ENCODE measurements at regions of chr1 and their contacts with region 1.

Region 1: DNA sequence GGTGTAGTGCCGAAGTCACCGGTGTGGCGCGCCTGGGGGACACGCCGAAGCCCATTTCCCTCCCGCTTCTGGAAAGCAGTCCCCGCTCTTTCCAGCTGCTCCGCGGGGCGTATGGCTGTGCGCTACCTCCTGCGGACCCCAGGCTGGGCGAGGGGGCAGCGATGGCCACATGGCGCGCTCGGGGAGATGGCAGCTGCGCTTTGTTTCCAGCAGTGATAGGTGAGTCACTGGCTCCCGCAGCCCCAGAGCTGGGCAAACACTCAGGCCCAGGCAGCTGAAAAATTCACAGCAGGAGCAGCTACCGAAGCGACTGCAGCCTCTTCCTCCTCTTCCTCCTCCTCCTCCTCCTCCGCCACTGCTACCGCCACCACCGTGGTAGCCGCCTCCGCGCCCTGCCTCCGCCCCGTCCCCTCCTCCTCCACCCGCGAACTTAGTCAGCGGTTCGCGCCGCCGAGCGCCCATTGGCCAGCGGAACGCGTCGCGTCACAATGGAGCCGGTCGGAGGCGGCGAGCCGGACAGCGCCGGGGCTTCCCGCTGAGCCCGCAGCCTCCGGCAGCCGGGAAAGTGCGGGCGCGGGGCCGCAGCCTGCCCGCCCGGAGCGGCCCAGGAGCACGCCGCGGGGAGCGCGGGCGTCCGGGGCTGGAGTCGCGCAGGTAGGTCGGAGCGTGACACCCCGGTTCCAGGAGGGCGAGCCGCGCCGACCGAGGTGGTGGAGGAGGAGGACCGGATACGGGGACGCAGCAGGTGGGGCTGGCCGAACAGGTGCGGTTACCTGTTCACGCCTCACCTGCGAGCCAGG is at the start of gene LRRC8B:
- DNase-seq: peak; percentile 93 to 94
- ATAC-seq: peak; percentile 99 to 100 (median 99)
- H3K4me3 ChIP-seq: peak within 1 kb of the TSS; percentile 71 to 99 (median 96)
- H3K27ac ChIP-seq: peak within 1 kb of the TSS in 9 of 10 donors; percentile 87 to 96 (median 90)
- H3K4me1 ChIP-seq: peaks cover 0 to 49% (median 17%) of the 10 kb centered on the region in 9 donors
- H3K27me3 ChIP-seq: no peaks in the 10 kb centered on the region
- CTCF ChIP-seq: no peak
- total RNA-seq, gene LRRC8B: 2.4 to 6.6 (median 4.5) TPM

Region 2: DNA sequence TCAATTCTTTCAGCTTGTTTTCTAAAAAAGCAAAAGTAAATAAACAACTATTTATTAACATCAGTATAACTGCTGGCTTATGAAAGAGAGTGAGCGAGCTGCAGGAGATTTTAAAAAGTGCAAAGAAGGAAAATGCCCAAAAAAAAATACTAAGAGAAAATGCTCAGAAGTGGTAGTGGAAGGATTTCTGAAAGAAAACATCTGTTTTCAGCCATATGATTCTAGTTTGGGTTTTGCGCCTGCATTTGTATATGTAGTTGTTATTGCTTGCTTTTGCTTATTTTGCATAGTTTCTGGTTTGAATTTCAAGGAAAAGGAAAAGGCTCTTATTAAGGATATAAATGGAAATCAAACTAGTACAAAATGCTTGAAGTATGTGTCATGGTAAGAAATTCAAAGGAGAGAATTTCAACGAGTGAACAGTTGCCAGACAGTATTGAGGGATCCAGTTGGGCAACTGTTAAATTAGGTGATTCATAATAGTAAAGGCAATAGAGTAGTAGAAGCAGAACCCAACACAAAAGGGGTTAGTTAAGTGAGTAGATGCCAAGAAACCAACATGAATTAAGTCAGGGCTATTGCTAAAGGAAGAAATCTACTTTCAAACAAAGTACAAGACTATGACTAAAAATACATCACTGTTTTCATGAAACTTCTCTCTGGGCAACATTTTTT is 253.1 kb before region 1 on chr1:
- intact Hi-C with region 1: no loop called
- DNase-seq: no peak
- ATAC-seq: peak in 1 of 8 donors; percentile 52
- H3K4me3 ChIP-seq: peak overlapping the region in 4 of 10 donors; percentile 16 to 55 (median 30)
- H3K27ac ChIP-seq: peak overlapping the region in 1 of 10 donors; percentile 83
- H3K4me1 ChIP-seq: peaks cover 0 to 72% (median 0%) of the 10 kb centered on the region in 9 donors
- H3K27me3 ChIP-seq: no peaks in the 10 kb centered on the region
- CTCF ChIP-seq: no peak

Region 3: GRCh38 chr1:89322402-89322801 is 202.2 kb before region 1 on chr1:
- intact Hi-C with region 1: no loop called
- DNase-seq: peak; percentile 11 to 74
- ATAC-seq: peak; percentile 38 to 98 (median 90)
- H3K4me3 ChIP-seq: no peak overlapping the region
- H3K27ac ChIP-seq: peak overlapping the region in 3 of 10 donors; percentile 16 to 32 (median 30)
- H3K4me1 ChIP-seq: peaks cover 0 to 19% (median 9%) of the 10 kb centered on the region in 9 donors
- H3K27me3 ChIP-seq: no peaks in the 10 kb centered on the region
- CTCF ChIP-seq: no peak

Region 4: DNA sequence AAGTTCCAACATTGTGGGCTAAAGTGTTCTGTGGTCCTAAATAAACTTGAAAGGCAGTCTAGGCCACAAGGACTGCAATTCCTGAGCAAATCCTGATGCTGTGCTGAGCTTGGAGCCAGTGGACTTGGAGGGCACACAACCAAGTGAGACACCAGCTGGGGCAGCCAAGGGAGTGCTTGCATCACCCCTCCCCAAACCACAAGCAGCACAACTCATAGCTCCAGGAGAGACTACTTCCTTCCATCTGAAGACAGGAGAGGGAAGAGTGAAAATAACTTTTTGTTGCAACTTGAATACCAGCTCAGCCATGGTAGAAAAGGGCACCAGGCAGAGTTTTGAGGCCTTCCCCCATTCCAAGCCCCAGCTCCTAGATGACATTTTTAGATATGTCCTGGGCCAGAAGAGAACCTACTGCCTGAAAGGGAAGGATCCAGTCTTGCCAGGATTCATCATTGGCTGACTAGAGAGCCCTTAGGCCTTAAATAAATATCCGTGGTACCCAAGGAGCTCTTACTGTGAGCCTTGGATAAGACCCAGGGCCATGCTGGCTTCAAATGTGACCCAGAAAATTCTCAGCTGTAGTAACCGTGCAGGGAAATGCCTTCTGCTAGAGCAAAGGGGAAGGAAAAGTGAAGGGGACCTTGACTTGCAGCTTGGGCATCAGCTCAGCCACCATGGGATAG is 35.4 kb before region 1 on chr1:
- intact Hi-C with region 1: loop called in 1 of 10 experiments (anchors 5 kb)
- DNase-seq: no peak
- ATAC-seq: no peak
- H3K4me3 ChIP-seq: no peak overlapping the region
- H3K27ac ChIP-seq: no peak overlapping the region
- H3K4me1 ChIP-seq: peaks cover 0 to 10% (median 0%) of the 10 kb centered on the region in 9 donors
- H3K27me3 ChIP-seq: no peaks in the 10 kb centered on the region
- CTCF ChIP-seq: no peak

Region 5: DNA sequence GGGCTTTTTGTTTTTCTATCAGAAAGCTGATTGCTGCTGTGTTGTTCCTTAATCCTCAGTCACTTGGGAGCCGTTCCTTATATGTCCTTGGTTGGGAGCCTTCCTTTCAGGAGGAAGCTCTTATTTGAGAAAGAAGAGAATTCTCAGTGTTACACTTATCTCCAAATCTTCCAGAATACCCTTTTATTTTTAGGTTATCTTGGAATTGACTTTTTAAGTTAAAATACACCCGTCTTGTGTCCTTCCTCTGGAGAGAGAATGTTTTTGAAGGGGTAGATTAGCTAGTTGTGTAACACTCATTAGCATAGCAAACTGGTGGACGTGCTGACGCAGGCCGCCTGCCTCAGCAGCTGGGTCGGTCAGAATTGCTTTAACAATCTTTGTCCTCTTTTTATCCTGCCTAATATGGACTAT is 42.2 kb after region 1 on chr1:
- intact Hi-C with region 1: loop called in 2 of 10 experiments (anchors 5 kb)
- DNase-seq: peak; percentile 49 to 56
- ATAC-seq: peak; percentile 59 to 96 (median 94)
- H3K4me3 ChIP-seq: peak overlapping the region in 5 of 10 donors; percentile 0 to 24 (median 20)
- H3K27ac ChIP-seq: peak overlapping the region; percentile 17 to 81 (median 64)
- H3K4me1 ChIP-seq: peaks cover 0 to 48% (median 6%) of the 10 kb centered on the region in 9 donors
- H3K27me3 ChIP-seq: no peaks in the 10 kb centered on the region
- CTCF ChIP-seq: no peak

Region 6: GRCh38 chr1:89590415-89591080 is 66.0 kb after region 1 on chr1:
- intact Hi-C with region 1: loop called in 3 of 10 experiments (anchors 5 kb)
- DNase-seq: no peak
- ATAC-seq: peak in 1 of 8 donors; percentile 15
- H3K4me3 ChIP-seq: no peak overlapping the region
- H3K27ac ChIP-seq: peak overlapping the region in 1 of 10 donors; percentile 50
- H3K4me1 ChIP-seq: peaks cover 0 to 23% (median 15%) of the 10 kb centered on the region in 9 donors
- H3K27me3 ChIP-seq: no peaks in the 10 kb centered on the region
- CTCF ChIP-seq: no peak

Region 7: DNA sequence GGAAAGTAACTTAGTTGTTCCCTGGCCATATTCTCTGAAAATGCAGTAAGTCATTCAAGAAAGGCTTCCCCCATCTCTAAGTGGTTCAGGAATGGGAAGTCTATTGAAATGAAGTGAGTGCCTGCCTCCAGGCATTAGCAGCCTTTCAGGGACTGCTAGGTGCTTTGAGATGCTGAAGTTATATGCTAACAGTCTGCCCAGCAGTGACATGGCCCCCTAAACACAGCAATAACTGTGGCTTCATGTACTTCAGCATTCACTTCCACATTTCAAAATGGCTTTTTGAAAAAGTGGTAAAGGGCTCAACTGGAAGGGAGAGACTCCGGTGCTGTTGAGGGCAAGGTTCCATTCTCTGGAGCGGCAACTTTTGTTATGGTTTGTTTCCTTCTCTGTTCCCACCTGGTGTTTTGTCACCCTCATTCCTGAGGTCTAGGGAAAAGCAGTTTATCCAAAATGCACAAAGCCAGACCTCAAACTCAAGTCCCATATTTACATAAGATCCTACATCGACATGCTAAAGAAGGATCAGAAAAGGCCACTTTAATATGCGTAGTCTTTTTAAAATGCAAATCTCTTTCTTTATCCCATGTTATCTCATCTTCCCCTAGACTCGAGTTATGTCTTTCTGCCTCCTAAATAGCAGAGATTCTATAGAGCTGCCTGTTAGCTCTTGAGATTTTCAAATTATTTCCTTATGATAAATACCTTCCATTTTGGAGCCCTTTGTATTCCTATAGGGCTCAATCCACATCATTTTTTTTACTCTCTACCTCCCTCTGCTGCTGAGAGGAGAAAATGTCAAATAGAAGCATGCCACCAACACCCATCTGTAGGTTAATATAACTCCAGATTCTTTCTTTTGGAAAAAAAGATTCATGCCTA is 74.1 kb after region 1 on chr1:
- intact Hi-C with region 1: loop called in 8 of 10 experiments (anchors 2 to 10 kb)
- DNase-seq: no peak
- ATAC-seq: peak in 5 of 8 donors; percentile 51 to 77 (median 74)
- H3K4me3 ChIP-seq: no peak overlapping the region
- H3K27ac ChIP-seq: no peak overlapping the region
- H3K4me1 ChIP-seq: peaks cover 0 to 19% (median 13%) of the 10 kb centered on the region in 9 donors
- H3K27me3 ChIP-seq: no peaks in the 10 kb centered on the region
- CTCF ChIP-seq: peak; percentile 43 to 81 (median 71)

Region 8: GRCh38 chr1:89605692-89606091 is 81.1 kb after region 1 on chr1:
- intact Hi-C with region 1: loop called in 3 of 10 experiments (anchors 5 to 10 kb)
- DNase-seq: no peak
- ATAC-seq: no peak
- H3K4me3 ChIP-seq: no peak overlapping the region
- H3K27ac ChIP-seq: peak overlapping the region in 4 of 10 donors; percentile 25 to 81 (median 40)
- H3K4me1 ChIP-seq: peaks cover 11 to 82% (median 69%) of the 10 kb centered on the region in 9 donors
- H3K27me3 ChIP-seq: no peaks in the 10 kb centered on the region
- CTCF ChIP-seq: no peak

Region 9: DNA sequence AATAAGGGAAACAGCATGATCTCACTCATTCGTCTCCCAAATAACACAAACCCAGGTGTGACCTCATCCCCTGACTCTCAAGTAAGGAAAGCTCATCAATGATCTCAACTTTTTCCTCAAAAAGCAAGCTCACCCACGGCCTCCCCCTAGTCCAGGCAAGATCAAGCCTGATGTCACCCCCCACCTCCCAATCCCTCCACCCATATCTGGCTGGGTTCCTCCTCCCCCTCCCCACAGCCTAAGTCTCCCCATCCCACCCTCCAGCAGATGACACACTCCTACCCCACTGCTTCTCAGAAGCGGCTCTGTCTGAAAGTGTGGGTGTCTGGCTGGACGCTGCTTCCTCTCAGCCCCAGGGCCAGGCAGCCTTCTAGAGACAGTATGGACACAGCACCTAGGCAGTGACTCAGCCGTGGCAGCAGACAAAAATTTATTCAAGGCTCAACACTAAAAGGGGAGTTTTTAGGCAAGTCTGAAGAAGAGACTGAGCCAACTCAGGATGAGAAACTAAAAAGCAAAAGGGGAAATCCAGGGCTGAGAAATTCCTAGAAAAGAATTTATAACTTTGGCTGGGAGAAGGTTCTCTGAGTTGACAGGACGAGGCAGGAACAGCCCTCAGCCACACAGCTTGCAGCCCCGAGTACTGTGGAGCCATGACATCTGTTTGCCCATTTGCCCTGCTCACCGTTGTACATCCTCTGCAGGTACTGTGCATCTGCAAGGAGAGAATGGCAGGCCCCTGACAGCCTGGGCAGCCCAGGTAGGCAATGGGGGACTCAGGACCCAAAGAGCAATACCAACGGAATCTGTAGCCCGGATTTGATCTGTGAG is 214.7 kb after region 1 on chr1:
- intact Hi-C with region 1: no loop called
- DNase-seq: no peak
- ATAC-seq: peak; percentile 50 to 81 (median 72)
- H3K4me3 ChIP-seq: no peak overlapping the region
- H3K27ac ChIP-seq: peak overlapping the region in 4 of 10 donors; percentile 19 to 46 (median 24)
- H3K4me1 ChIP-seq: peaks cover 0 to 27% (median 11%) of the 10 kb centered on the region in 9 donors
- H3K27me3 ChIP-seq: no peaks in the 10 kb centered on the region
- CTCF ChIP-seq: no peak

Measured in heart right ventricle (tissue), 16 donors.